Naive thymus-derived CD4-positive, alpha-beta T cell (primary cell): ENCODE measurements at regions of chr15 and their contacts with region 1.

Region 1: GRCh38 chr15:90571063-90571541 is 41.4 kb downstream of the CRTC3 start:
- DNase-seq: no peak
- ATAC-seq: peak; percentile 71
- H3K4me3 ChIP-seq: no peak overlapping the region
- H3K4me3 Mint-ChIP-seq: peak overlapping the region; percentile 1 to 76 (median 54)
- H3K27ac ChIP-seq: peak overlapping the region; percentile 22
- H3K27ac Mint-ChIP-seq: peak overlapping the region; percentile 3 to 94 (median 86)
- H3K4me1 ChIP-seq: peaks cover 39 to 92% of the 10 kb centered on the region in 2 donors
- H3K4me1 Mint-ChIP-seq: peaks cover 55 to 97% (median 89%) of the 10 kb centered on the region in 7 donors
- H3K27me3 ChIP-seq: no peaks in the 10 kb centered on the region
- H3K27me3 Mint-ChIP-seq: no peaks in the 10 kb centered on the region

Region 2: DNA sequence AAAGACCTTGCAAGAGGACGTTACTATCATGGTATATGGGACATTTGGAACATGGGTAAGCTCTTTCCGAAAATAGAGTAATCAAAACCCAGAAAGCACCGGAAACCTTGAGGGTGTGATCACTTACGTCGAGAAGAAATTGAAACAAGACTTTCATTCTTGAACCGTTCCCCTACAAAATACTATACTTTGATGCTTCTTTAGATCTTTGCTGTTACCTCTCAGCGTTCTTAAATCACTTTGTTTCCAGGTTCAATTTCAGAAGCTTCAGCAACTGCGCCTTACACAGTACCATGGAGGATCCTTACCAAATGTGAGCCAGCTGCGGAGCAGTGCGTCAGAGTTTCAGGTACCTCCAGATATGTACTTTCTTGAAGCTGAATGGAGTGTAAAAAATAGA is 31.3 kb before region 1 on chr15:
- CTCF ChIA-PET with region 1: interaction called, 5 read pairs
- POLR2A ChIA-PET with region 1: interaction called, 8 read pairs
- intact Hi-C with region 1: loop called in 1 of 2 experiments (anchors 1 kb)
- DNase-seq: peak in 7 of 9 donors; percentile 66 to 84 (median 79)
- ATAC-seq: peak; percentile 89
- H3K4me3 ChIP-seq: peak overlapping the region; percentile 7
- H3K4me3 Mint-ChIP-seq: peak overlapping the region; percentile 79 to 97 (median 88)
- H3K27ac ChIP-seq: peak overlapping the region; percentile 83
- H3K27ac Mint-ChIP-seq: peak overlapping the region; percentile 94 to 99 (median 97)
- H3K4me1 ChIP-seq: peaks cover 7 to 67% of the 10 kb centered on the region in 2 donors
- H3K4me1 Mint-ChIP-seq: peaks cover 45 to 93% (median 86%) of the 10 kb centered on the region in 7 donors
- H3K27me3 ChIP-seq: no peaks in the 10 kb centered on the region
- H3K27me3 Mint-ChIP-seq: no peaks in the 10 kb centered on the region

Region 3: DNA sequence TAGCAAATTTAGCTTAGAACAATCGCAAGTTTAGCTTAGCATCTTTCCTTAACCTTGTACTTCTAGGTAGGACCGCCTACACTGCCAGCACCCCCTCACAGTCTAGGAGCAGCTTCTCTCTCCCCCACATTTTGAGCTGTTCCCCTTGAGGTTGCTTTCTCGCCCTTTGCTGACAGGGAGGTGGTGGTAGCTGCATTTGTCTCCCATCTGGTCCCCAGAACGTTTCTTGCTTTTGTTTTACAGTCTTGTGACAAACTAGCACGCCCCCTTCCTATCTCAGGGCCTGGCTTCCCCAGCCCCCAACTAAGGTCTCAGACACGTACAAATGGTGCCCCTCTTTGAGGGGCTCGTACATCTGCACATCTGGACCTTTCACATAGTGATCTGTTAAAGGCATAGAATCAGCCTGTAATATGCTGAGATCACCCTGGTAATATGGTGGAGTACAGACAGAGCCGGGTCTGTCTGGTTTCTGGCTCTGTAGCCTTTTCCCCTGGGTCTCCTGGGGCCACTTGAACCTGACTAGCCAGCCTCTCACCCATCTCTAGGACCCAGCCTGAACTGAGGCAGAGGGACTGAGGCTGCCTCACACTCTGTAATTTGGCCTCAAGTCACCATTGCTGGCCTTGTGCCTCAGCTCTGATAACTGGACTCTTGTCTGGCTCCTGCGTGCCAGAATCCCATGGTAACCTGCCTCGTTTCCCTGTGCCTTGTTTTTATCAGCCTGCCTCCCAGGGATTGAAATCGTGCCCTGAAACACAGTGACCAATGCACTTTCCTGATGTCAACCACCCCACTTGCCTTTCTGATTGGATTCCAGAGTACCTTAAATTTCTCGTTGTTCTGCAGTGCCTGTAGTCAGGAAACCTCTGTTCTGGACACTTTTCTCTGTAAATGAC is 13.7 kb before region 1 on chr15:
- CTCF ChIA-PET with region 1: interaction called, 6 read pairs
- POLR2A ChIA-PET with region 1: interaction called, 18 read pairs
- intact Hi-C with region 1: loop called (anchors 1 kb)
- DNase-seq: peak in 1 of 9 donors; percentile 18
- ATAC-seq: no peak
- H3K4me3 ChIP-seq: no peak overlapping the region
- H3K4me3 Mint-ChIP-seq: peak overlapping the region; percentile 22 to 70 (median 54)
- H3K27ac ChIP-seq: peak overlapping the region; percentile 14
- H3K27ac Mint-ChIP-seq: peak overlapping the region; percentile 57 to 95 (median 86)
- H3K4me1 ChIP-seq: peaks cover 10 to 50% of the 10 kb centered on the region in 2 donors
- H3K4me1 Mint-ChIP-seq: peaks cover 56 to 89% (median 85%) of the 10 kb centered on the region in 7 donors
- H3K27me3 ChIP-seq: no peaks in the 10 kb centered on the region
- H3K27me3 Mint-ChIP-seq: no peaks in the 10 kb centered on the region

Region 4: DNA sequence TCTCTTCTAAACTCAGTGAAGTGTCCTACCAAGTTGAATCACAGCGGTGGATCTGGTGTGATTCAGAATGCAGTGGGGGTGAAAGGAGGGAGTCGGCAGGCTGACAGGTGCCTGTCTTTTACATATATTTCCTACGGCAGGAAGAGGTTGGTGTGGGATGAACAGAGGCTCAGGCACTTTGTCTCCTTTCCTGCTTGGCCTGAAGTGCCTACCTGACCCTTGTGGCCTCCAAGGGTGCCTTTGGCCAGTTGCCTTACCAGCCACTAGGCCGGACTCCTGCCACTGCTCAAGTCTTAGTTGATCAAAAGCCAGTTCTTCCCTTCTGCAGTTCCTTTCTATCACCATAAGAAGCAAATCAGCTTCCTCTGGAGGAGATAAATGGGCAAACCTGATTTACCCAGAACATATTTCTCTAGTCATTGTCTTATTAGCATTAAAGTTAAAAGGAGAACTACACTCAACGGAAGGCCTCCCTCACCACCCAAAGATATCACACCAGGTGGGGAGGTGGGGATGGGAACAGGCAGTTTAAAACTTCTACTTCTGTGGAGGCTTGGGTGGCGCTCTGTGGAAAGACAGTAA is 10.8 kb after region 1 on chr15:
- CTCF ChIA-PET with region 1: interaction called, 6 read pairs
- POLR2A ChIA-PET with region 1: interaction called, 6 read pairs
- intact Hi-C with region 1: loop called in 1 of 2 experiments (anchors 1 kb)
- DNase-seq: peak in 2 of 9 donors; percentile 25 to 29
- ATAC-seq: peak; percentile 51
- H3K4me3 ChIP-seq: no peak overlapping the region
- H3K4me3 Mint-ChIP-seq: peak overlapping the region; percentile 62 to 86 (median 76)
- H3K27ac ChIP-seq: peak overlapping the region; percentile 70
- H3K27ac Mint-ChIP-seq: peak overlapping the region; percentile 65 to 99 (median 92)
- H3K4me1 ChIP-seq: peaks cover 4 to 45% of the 10 kb centered on the region in 2 donors
- H3K4me1 Mint-ChIP-seq: peaks cover 48 to 94% (median 78%) of the 10 kb centered on the region in 7 donors
- H3K27me3 ChIP-seq: no peaks in the 10 kb centered on the region
- H3K27me3 Mint-ChIP-seq: no peaks in the 10 kb centered on the region

Region 5: GRCh38 chr15:90592131-90592881 is 21.2 kb after region 1 on chr15:
- CTCF ChIA-PET with region 1: interaction called, 4 read pairs
- POLR2A ChIA-PET with region 1: interaction called, 15 read pairs
- intact Hi-C with region 1: loop called (anchors 1 kb)
- DNase-seq: no peak
- ATAC-seq: no peak
- H3K4me3 ChIP-seq: no peak overlapping the region
- H3K4me3 Mint-ChIP-seq: peak overlapping the region in 6 of 10 donors; percentile 3 to 82 (median 20)
- H3K27ac ChIP-seq: peak overlapping the region; percentile 34
- H3K27ac Mint-ChIP-seq: peak overlapping the region; percentile 51 to 100 (median 98)
- H3K4me1 ChIP-seq: peaks cover 23 to 59% of the 10 kb centered on the region in 2 donors
- H3K4me1 Mint-ChIP-seq: peaks cover 54 to 81% (median 75%) of the 10 kb centered on the region in 7 donors
- H3K27me3 ChIP-seq: no peaks in the 10 kb centered on the region
- H3K27me3 Mint-ChIP-seq: no peaks in the 10 kb centered on the region

Region 6: GRCh38 chr15:90603893-90604292 is 32.8 kb after region 1 on chr15:
- CTCF ChIA-PET with region 1: interaction called, 12 read pairs
- POLR2A ChIA-PET with region 1: interaction called, 4 read pairs
- intact Hi-C with region 1: no loop called
- DNase-seq: peak in 4 of 9 donors; percentile 35 to 44 (median 38)
- ATAC-seq: peak; percentile 55
- H3K4me3 ChIP-seq: no peak overlapping the region
- H3K4me3 Mint-ChIP-seq: peak overlapping the region in 2 of 10 donors; percentile 0 to 7
- H3K27ac ChIP-seq: no peak overlapping the region
- H3K27ac Mint-ChIP-seq: peak overlapping the region in 8 of 9 donors; percentile 14 to 83 (median 70)
- H3K4me1 ChIP-seq: peaks cover 0 to 32% of the 10 kb centered on the region in 2 donors
- H3K4me1 Mint-ChIP-seq: peaks cover 37 to 76% (median 58%) of the 10 kb centered on the region in 7 donors
- H3K27me3 ChIP-seq: no peaks in the 10 kb centered on the region
- H3K27me3 Mint-ChIP-seq: no peaks in the 10 kb centered on the region

Region 7: DNA sequence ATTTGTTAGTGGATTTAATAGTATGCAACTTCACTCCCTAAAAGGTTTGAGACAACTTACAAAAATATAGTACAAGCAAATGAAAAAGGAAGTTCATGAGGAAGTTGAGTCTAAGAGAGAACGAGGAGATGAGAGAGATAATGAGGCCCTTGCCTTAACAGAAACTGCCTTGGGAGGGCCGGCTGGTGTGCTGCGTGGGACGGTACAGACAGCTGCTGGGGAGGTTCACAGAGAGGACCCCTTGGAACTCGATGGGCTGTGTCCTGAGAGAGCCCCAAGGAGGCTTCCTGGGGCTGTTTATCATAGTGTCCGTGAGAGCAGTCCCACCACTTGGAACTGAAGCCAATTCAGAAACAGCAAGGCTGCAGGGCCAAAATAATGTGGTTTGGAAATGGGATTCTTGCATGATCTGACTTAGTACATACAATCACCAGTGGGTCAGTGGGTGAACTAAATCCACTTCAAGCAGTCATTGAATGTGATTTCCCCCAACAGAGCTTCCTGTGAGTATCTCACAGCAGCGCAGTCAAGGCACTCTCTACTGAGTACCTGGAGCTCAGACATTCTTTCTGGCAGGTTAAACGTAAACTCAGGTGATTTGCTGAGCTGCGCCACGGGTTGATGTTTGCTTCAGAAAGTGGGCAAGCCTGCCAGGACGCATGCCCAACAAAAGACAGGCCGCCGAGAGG is 49.4 kb after region 1 on chr15:
- CTCF ChIA-PET with region 1: no interaction called
- POLR2A ChIA-PET with region 1: no interaction called
- intact Hi-C with region 1: loop called in 1 of 2 experiments (anchors 2 kb)
- DNase-seq: peak in 5 of 9 donors; percentile 28 to 45 (median 39)
- ATAC-seq: peak; percentile 80
- H3K4me3 ChIP-seq: peak overlapping the region; percentile 32
- H3K4me3 Mint-ChIP-seq: peak overlapping the region; percentile 42 to 82 (median 75)
- H3K27ac ChIP-seq: peak overlapping the region; percentile 53
- H3K27ac Mint-ChIP-seq: peak overlapping the region; percentile 85 to 97 (median 90)
- H3K4me1 ChIP-seq: peaks cover 0 to 18% of the 10 kb centered on the region in 2 donors
- H3K4me1 Mint-ChIP-seq: peaks cover 21 to 44% (median 38%) of the 10 kb centered on the region in 7 donors
- H3K27me3 ChIP-seq: no peaks in the 10 kb centered on the region
- H3K27me3 Mint-ChIP-seq: no peaks in the 10 kb centered on the region